ENCODE measurements at regions of chr13 and their contacts with region 1.

Region 1: GRCh38 chr13:108895220-108895704 is 265.9 kb downstream of the MYO16 start:
- DNase-seq: peak in 1 of 2 experiments; percentile 52
- H3K4me3 ChIP-seq: no peak overlapping the region
- H3K4me3 Mint-ChIP-seq: no peak overlapping the region
- H3K27ac Mint-ChIP-seq: no peak overlapping the region
- H3K4me1 ChIP-seq: no peaks in the 10 kb centered on the region
- H3K4me1 Mint-ChIP-seq: no peaks in the 10 kb centered on the region
- H3K27me3 ChIP-seq: no peaks in the 10 kb centered on the region
- H3K27me3 Mint-ChIP-seq: no peaks in the 10 kb centered on the region
- CTCF ChIP-seq: peak; percentile 26 to 53

Region 2: DNA sequence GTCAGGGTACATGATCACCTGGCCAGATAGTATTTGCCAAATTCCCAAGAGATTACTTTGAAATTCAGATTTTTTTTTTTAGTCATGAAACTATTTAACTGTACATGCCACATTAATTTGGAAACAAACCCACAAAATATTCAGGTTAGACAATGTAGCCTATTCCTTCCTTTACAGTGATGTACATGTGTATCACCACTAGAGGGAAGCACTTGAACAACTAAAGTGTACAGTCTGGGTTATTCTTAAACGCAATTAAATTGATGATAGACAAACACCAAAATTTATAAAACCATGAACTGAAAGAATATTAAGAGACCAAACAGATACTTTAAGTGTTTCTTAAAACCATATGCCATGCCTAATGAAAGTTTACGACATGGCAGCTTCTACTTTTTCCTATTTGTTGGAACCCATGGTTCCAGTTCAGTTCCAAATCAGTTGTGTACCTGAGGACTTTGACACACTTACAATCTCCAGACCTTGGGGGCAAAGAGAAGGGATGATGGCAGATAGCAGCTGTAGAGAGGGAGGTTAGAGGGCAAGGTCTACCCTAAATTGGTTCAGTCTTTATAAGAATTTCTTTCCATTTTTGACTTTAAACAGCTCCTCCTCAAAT is 572.9 kb before region 1 on chr13:
- CTCF ChIA-PET with region 1: interaction called, 4 read pairs
- POLR2A ChIA-PET with region 1: no interaction called
- intact Hi-C with region 1: loop called (anchors 1 kb)
- DNase-seq: peak in 1 of 2 experiments; percentile 40
- H3K4me3 ChIP-seq: no peak overlapping the region
- H3K4me3 Mint-ChIP-seq: no peak overlapping the region
- H3K27ac Mint-ChIP-seq: no peak overlapping the region
- H3K4me1 ChIP-seq: no peaks in the 10 kb centered on the region
- H3K4me1 Mint-ChIP-seq: no peaks in the 10 kb centered on the region
- H3K27me3 ChIP-seq: no peaks in the 10 kb centered on the region
- H3K27me3 Mint-ChIP-seq: peaks cover 7% of the 10 kb centered on the region
- CTCF ChIP-seq: peak; percentile 75 to 84

Region 3: GRCh38 chr13:108508263-108508662 is 387.0 kb before region 1 on chr13:
- CTCF ChIA-PET with region 1: no interaction called
- POLR2A ChIA-PET with region 1: no interaction called
- intact Hi-C with region 1: loop called (anchors 5 kb)
- DNase-seq: peak in 1 of 2 experiments; percentile 16
- H3K4me3 ChIP-seq: no peak overlapping the region
- H3K4me3 Mint-ChIP-seq: no peak overlapping the region
- H3K27ac Mint-ChIP-seq: no peak overlapping the region
- H3K4me1 ChIP-seq: no peaks in the 10 kb centered on the region
- H3K4me1 Mint-ChIP-seq: no peaks in the 10 kb centered on the region
- H3K27me3 ChIP-seq: no peaks in the 10 kb centered on the region
- H3K27me3 Mint-ChIP-seq: no peaks in the 10 kb centered on the region
- CTCF ChIP-seq: peak; percentile 27 to 50

Region 4: GRCh38 chr13:108728370-108728769 is 166.9 kb before region 1 on chr13:
- CTCF ChIA-PET with region 1: no interaction called
- POLR2A ChIA-PET with region 1: interaction called, 5 read pairs
- intact Hi-C with region 1: loop called (anchors 5 kb)
- DNase-seq: peak; percentile 41 to 46
- H3K4me3 ChIP-seq: no peak overlapping the region
- H3K4me3 Mint-ChIP-seq: no peak overlapping the region
- H3K27ac Mint-ChIP-seq: no peak overlapping the region
- H3K4me1 ChIP-seq: no peaks in the 10 kb centered on the region
- H3K4me1 Mint-ChIP-seq: no peaks in the 10 kb centered on the region
- H3K27me3 ChIP-seq: no peaks in the 10 kb centered on the region
- H3K27me3 Mint-ChIP-seq: peaks cover 3% of the 10 kb centered on the region
- CTCF ChIP-seq: peak; percentile 38 to 70

Measured in Caco-2 (cell line).